Posterior cingulate gyrus (tissue), 11 donors: ENCODE measurements at regions of chr17 and their contacts with region 1.

Region 1: DNA sequence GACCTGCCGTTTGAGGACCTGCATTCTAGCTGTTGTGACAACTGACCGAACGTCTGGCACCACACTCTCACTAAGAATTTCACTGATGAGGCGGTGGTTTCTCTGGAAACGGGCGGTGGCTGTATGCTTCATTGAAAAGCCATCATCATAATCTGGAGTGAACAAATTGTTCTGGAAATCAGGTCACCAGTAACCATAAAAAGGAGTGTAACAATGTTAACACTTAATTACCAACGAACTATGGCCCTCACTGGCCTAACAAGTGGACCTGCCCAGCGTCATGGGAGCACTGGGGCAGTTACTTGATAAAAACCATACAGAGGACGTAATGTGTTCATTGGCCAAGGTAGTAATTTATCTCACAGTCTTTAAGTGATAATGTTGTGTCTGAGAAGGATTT is 15.4 kb downstream of the SMARCE1 start:
- DNase-seq: no peak

Region 2: DNA sequence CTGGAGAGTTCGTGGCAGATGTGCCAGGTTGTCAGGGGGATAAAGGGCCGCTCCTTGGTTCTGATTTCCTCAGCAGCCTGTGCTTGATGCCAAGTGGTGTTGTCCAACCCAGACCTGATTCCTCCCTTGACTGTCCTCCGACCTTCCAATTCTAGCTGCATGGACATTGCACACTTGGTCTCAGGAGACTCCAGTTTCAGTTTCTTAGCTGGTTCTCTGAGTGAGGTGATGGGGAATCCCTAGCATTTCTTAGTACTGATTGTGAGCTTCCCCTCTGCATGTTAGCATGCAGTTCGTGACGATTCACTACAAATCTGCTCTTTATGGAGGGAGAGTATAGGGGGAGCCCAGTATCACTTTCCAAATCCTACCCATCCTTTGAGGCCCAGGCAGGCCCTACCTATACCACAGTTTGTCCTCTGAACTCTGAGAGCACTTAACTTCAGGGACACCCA is 54.6 kb before region 1 on chr17:
- intact Hi-C with region 1: loop called (anchors 10 kb)
- DNase-seq: no peak

Region 3: DNA sequence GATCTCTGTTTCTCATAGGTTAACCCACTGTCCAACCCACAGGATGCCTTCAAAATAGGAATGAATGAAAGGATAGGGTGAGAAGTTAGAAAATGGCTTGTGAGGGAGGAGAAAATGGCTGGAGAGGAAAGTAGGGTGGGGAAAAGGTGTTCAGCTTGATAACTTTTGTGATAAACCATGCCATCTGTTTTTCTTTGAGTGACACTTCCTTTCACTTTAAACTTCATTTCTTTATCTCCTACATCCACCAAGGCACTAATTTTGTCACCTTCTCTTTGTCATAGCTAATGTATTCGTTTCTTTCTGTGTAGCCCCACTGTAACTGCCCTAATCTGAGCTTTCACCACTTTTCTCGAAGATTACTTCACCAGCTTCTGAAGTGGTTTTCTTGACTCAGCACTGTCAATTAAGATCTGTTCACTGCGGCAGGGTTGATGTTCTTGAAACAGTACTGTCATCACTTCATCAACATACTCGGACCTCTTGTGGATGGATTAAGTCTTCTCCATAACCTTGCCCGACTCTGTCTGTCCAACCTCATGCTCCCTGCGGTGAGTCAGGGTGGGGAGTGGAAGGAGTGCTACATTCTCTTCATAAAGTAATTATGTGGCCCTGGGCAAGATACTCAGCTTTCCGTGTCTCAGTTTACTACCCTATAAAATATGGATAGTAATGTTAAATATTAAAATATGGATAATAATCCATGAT is 195.7 kb after region 1 on chr17:
- intact Hi-C with region 1: no loop called
- DNase-seq: no peak